ENCODE measurements at regions of chr5 and their contacts with region 1.

Region 1: GRCh38 chr5:123937230-123937629 is 425.3 kb downstream of the CSNK1G3 start:
- DNase-seq: peak; percentile 77
- H3K4me3 ChIP-seq: no peak overlapping the region
- H3K27ac ChIP-seq: no peak overlapping the region
- H3K4me1 ChIP-seq: no peaks in the 10 kb centered on the region
- CTCF ChIP-seq: peak; percentile 84

Region 2: GRCh38 chr5:123671042-123671441 is 266.2 kb before region 1 on chr5:
- CTCF ChIA-PET with region 1: no interaction called
- POLR2A ChIA-PET with region 1: no interaction called
- intact Hi-C with region 1: loop called (anchors 2 kb)
- DNase-seq: peak; percentile 65
- H3K4me3 ChIP-seq: no peak overlapping the region
- H3K27ac ChIP-seq: no peak overlapping the region
- H3K4me1 ChIP-seq: peaks cover 3% of the 10 kb centered on the region
- CTCF ChIP-seq: peak; percentile 92

Measured in OCI-LY7 (cell line).